Dorsolateral prefrontal cortex (tissue), 120 donors: ENCODE measurements at regions of chr10 and their contacts with region 1.

Region 1: DNA sequence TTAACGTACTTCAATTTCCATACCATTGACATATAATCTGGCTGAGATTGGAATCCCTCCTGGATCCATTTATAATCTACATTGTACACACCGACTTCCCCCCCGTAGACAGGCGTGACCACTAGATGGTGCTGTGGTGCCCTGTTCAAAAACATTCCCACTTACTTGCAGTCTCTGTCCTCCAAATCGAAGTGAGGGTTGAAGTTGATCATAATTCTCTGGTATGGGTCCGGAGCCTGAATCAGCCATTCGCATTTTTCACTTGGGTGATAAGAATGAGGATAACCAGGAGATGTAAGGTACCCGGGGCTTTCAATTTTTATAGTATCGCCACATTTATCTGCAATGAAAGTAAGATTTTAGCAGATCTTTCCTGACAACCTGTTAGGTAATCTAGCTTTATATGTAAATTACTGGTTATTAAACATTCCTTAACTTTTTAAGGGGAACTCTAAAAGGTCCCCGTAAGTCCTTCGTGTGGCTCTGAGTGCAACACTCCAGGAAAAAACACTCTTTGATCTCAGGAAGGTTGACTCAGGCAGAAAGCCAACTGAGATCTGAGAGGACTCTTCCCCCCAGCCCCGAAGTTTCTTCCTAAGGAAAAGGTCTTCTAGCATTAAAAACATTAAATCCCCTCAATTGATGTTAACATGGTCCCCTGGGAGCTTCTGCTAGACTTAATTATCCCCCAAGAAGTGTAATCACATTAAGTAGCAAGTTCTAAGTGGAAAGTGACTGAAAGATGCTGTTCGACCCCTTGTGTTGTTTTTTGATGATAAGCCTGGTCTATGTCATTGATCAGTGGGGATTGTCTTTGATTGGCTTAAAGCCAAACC is 3.7 kb downstream of the NRP1 start:
- DNase-seq: peak; percentile 45 to 92 (median 80)
- H3K4me3 ChIP-seq: peak overlapping the region in 52 of 59 donors; percentile 1 to 85 (median 72)
- H3K27ac ChIP-seq: peak overlapping the region in 3 of 59 donors; percentile 11 to 32 (median 22)
- H3K27me3 ChIP-seq: peaks cover 0 to 18% (median 0%) of the 10 kb centered on the region in 45 donors
- CTCF ChIP-seq: peak; percentile 72 to 98 (median 92)

Region 2: GRCh38 chr10:33193057-33193700 is 137.6 kb before region 1 on chr10:
- intact Hi-C with region 1: loop called (anchors 5 to 10 kb)
- DNase-seq: peak in 8 of 10 donors; percentile 19 to 79 (median 69)
- H3K4me3 ChIP-seq: peak overlapping the region in 1 of 59 donors; percentile 15
- H3K27ac ChIP-seq: no peak overlapping the region
- H3K27me3 ChIP-seq: peaks cover 0 to 10% (median 0%) of the 10 kb centered on the region in 45 donors
- CTCF ChIP-seq: peak; percentile 53 to 87 (median 74)

Region 3: DNA sequence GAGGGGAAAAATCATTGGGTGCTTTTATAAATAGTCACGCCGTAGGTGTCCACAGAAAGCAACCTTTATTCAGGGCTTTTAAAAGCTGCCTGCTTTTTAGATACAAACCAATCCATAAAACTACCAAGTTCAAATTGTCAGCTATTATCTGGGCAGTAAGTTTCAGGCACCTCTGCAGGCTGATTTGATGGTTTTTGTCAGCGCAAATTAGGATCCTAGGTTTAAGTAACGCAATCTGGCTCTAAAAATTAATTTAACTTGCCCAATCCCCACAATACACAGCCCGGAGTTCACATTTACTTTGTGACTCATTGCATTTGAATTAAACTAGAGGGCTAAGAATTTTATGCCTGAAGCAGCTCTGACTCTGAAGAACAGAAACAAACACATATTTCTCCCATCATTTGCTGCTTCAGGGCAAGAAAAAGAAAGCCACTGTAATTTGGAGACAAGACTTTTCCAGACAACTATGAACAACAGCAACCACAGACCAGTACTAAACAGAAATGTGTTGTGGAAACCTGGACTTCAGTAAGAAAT is 39.6 kb before region 1 on chr10:
- intact Hi-C with region 1: no loop called
- DNase-seq: no peak
- H3K4me3 ChIP-seq: no peak overlapping the region
- H3K27ac ChIP-seq: no peak overlapping the region
- H3K27me3 ChIP-seq: peaks cover 0 to 23% (median 0%) of the 10 kb centered on the region in 45 donors
- CTCF ChIP-seq: no peak

Region 4: DNA sequence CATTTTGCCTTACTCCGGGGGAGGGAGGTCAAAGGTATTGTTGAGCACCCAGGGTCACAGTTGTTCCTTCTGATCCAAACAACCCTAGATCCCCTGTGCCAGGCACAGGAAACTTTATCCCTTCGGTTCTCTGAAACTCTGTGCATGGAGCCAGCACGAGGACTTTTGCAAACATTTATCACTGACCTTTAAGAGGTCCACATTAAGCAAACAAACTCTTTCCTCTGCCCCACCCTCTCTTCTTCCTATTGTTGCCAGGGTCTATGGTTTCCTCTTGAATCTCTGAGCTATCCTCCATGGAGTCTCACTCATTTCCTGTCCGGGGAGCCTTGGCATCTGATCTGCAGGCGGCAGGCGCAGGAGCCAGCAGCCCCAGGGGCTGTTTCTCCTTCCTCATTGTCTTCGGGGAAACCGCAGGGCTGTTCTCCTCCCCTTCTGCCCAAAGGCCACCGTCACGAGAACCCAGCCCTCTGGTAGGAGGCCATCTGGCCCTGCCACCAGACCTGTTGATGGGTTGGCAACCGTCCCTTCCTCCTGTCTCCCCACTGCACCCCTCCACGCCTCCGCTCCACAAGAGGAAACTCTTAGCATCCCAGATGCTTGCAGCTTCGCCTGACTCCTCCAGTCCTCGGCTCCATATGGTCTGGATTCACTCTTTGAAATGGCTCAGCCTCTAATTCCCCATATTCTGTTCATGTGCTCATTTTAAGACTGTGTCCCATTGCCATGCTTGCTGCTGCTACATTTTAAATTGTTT is 331.0 kb after region 1 on chr10:
- intact Hi-C with region 1: loop called in 1 of 2 experiments (anchors 10 kb)
- DNase-seq: peak; percentile 3 to 70 (median 55)
- H3K4me3 ChIP-seq: peak overlapping the region in 1 of 59 donors; percentile 18
- H3K27ac ChIP-seq: peak overlapping the region in 1 of 59 donors; percentile 16
- H3K27me3 ChIP-seq: no peaks in the 10 kb centered on the region
- CTCF ChIP-seq: no peak

Region 5: DNA sequence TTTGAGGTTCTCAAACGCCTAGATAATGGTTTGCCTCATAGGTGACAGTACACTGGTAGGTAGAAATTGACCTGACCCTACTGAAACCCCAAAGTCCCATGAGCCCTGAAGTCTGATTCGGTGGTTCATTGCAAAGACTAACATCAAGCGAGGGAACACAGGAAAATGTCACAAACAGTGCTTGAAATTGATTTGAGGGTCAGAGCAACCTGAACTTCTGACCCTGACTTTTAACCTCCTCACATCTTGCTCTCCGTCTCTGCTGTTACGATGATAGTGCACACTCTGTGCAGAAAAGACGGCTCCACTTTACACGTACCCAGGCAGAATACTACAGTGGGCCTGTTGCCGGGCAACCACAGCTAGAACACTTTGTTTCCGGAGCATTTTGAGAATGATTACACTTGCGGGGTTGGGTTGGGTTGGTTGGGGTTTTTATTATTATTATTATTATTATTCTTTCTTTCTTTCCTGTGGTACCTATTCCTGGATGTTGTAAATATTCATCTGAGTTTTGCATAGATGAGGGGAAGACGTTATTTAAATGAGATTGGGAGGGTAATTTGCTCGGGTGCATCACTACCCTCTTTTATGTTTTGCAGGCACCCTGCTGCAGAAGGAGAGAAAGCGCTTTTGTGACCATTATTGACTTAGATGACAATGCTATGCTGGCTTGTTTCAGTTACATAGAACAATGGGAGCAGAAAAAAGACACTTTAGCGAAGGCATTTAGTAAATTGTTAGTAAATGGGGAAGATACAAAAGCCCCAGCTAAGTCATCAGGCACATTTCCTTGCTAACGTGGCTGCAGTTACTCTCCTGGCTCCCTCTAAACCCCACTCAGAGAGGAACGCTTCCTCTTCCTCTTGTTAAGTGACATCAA is 441.9 kb after region 1 on chr10:
- intact Hi-C with region 1: loop called in 1 of 2 experiments (anchors 10 kb)
- DNase-seq: peak in 7 of 10 donors; percentile 4 to 69 (median 39)
- H3K4me3 ChIP-seq: peak overlapping the region in 43 of 59 donors; percentile 2 to 56 (median 25)
- H3K27ac ChIP-seq: peak overlapping the region in 13 of 59 donors; percentile 1 to 66 (median 37)
- H3K27me3 ChIP-seq: peaks cover 0 to 26% (median 0%) of the 10 kb centered on the region in 45 donors
- CTCF ChIP-seq: no peak

Region 6: GRCh38 chr10:34637418-34637911 is 1306.7 kb after region 1 on chr10:
- intact Hi-C with region 1: loop called (anchors 2 to 5 kb)
- DNase-seq: peak in 9 of 10 donors; percentile 29 to 85 (median 70)
- H3K4me3 ChIP-seq: peak overlapping the region in 19 of 59 donors; percentile 4 to 46 (median 21)
- H3K27ac ChIP-seq: no peak overlapping the region
- H3K27me3 ChIP-seq: no peaks in the 10 kb centered on the region
- CTCF ChIP-seq: peak; percentile 82 to 98 (median 95)